ENCODE measurements at regions of chr2 and their contacts with region 1.

Region 1: DNA sequence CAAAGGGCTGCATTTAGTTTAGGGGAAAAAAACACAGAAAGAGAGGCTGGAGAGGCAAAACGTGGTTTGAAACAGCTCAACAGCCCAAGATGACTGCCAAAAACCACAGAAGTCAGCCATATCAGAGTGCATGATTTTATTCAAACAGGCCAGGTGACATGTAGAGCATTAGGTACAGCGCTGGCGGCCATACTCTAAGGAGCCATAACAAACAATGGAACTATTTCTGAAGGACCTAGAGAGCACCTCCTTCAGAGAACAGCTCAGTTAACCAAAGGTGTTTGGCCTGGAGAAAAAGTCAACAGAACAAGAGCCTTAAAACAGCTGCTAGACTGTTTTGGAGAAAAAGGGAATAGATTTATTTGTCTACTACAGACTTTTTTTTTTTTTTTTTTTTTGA is 2.6 kb downstream of the THADA start:
- DNase-seq: no peak
- ATAC-seq: no peak
- H3K4me3 ChIP-seq: no peak overlapping the region
- H3K27ac ChIP-seq: no peak overlapping the region
- H3K4me1 ChIP-seq: peaks cover 15% of the 10 kb centered on the region
- H3K27me3 ChIP-seq: no peaks in the 10 kb centered on the region
- CTCF ChIP-seq: no peak

Region 2: DNA sequence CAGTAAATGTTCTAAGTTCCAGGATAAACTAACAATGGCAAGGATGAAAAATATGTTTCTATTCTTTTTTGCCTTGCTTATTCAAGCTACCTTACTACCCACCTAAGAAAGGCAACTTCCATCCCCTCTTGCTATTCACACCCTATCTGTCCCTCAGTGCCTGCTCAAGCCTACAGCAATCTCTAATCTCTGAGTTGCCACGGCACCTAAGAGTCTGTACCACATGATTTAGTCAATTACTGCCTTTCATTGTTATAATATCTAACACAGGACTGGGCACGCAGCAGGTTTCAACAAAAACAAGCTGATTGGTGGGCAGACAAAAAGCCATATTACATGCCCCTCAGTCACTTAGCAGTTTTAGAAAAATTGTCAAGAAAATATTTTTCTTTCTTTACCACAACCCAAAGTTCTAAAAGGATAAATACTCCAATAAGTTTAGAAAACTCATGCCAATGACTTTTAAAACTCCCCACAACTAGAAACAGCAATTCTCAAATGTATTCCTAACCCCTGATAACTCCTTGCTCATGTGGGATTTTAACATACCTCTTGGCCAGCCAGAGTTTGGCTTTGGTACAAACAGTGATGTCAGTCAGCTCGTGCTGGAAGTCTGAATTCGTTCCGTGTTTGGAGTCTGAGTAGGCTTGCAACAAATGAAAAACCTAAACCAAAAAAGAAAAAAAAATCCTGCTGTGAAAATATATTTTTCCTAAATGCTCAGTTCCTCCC is 249.5 kb before region 1 on chr2:
- CTCF ChIA-PET with region 1: interaction called, 13 read pairs
- POLR2A ChIA-PET with region 1: no interaction called
- intact Hi-C with region 1: no loop called
- DNase-seq: no peak
- ATAC-seq: no peak
- H3K4me3 ChIP-seq: no peak overlapping the region
- H3K27ac ChIP-seq: no peak overlapping the region
- H3K4me1 ChIP-seq: peaks cover 23% of the 10 kb centered on the region
- H3K27me3 ChIP-seq: no peaks in the 10 kb centered on the region
- CTCF ChIP-seq: no peak

Region 3: DNA sequence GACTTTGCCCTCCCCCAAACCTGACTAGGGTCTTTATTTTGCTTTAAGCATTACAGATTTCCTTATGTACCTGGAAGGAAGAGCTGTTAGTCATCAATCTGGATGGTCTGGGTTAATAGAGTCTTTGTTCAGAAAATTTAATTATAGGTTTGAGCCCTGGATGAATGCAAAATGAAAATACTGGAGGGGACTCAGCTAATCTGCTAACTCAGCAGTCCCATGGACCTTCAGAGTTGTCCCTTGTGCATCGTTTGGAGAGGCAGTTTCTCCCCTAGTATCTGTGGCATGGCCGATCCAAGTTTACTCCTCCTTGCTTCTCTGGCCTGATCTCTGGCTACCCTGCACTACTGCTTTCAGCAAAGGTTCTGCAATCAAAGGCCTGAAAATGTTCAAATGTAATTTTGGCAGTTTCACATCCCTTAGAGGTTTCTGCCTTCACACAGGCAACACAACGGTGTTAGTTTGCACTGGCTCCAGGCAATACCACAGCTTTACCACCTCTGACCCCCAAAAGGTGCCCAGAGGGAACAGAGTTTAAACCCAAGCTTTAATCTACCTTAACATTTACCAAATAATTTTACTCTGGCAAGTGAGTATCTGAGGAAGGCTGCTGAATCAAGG is 131.7 kb before region 1 on chr2:
- CTCF ChIA-PET with region 1: no interaction called
- POLR2A ChIA-PET with region 1: no interaction called
- intact Hi-C with region 1: no loop called
- DNase-seq: peak; percentile 37
- ATAC-seq: peak; percentile 10; the same call in 1 of the 2 replicates
- H3K4me3 ChIP-seq: no peak overlapping the region
- H3K27ac ChIP-seq: no peak overlapping the region
- H3K4me1 ChIP-seq: peaks cover 61% of the 10 kb centered on the region
- H3K27me3 ChIP-seq: no peaks in the 10 kb centered on the region
- CTCF ChIP-seq: no peak

Measured in PC-3 (cell line).